Thyroid gland (tissue), 4 donors: ENCODE measurements at regions of chr9 and their contacts with region 1.

Region 1: DNA sequence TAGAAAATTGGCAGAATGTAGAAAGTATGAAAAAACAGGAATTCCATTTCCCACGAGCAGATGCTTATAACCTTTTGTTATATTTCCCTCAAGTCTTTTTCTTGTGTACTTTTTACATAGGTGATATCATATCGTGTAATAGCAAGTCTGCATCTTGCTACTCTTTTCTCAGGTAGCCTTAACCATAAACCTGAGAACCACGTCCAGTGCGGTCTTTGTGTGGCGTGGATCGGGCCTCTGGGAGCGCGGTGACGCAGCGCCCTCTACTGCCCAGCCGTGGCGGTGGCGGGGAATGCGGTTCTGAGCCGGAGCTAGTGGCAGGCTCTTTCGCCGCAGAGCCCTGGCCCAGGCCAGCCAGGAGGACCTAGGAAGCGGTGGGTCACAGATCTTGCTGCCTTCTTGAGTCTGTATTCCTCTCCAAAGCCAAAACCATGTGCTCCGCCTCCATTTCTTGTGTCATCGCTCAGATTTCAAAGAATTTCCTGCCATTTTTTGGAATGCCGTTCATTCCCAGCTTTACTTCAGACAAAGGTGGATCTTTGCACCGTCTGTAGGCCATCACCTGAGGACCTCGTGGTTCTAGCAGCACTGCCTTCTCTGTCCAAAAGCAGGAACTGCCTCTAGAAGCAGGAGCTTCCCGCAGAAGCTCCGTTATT is 71.9 kb downstream of the MVB12B start:
- DNase-seq: peak; percentile 75 to 76
- H3K4me3 ChIP-seq: no peak overlapping the region
- H3K27ac ChIP-seq: no peak overlapping the region
- H3K4me1 ChIP-seq: no peaks in the 10 kb centered on the region
- H3K27me3 ChIP-seq: no peaks in the 10 kb centered on the region
- CTCF ChIP-seq: peak; percentile 91 to 98 (median 94)
- POLR2A ChIP-seq: no peak

Region 2: DNA sequence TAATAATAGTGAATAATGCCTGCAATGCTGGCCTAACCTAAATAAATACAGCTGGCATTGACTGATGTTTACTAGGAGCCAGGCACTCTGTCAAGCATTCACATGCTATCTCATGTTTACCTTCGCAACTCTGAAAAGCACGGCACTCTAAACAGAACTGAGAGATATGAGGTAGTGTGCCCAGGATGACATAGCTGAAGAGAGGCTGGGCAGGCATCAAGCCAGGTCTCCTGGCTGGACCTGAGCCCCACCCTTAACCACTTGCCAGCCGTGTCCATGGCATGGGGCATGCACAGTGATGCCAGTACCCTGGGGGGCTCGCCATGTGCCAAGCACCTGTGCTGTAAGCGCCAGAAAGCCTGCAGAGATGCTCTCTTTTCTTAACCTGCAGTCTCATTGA is 191.3 kb before region 1 on chr9:
- intact Hi-C with region 1: no loop called
- DNase-seq: no peak
- H3K4me3 ChIP-seq: no peak overlapping the region
- H3K27ac ChIP-seq: no peak overlapping the region
- H3K4me1 ChIP-seq: no peaks in the 10 kb centered on the region
- H3K27me3 ChIP-seq: no peaks in the 10 kb centered on the region
- CTCF ChIP-seq: no peak
- POLR2A ChIP-seq: no peak

Region 3: DNA sequence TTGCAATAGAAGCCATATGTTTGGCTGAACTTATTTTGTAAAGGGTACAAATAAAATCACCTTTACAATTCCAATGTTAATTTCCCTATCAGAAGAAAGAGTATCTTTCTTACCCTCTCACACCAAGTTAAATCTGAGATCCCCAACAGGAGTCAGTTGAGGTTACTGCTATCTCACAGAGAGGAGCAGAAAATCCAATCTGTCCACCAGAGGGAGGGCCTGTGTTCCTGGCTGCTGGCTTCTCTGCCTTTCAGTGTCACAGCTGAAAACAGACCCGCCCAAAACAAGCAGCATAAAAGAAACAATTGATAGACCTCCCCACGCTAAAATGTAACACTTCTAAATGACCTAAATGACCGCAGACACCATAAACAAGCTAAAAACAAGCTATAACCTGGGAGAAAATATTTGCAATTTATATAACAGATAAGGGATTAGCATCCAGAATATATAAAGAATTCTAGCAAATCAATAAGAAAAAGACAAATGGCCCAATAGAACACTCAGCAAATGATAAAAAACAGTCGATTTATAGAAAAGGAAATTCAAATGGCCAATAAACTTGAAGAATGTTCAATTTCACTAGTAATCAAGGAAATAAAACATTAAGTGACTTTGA is 96.4 kb before region 1 on chr9:
- intact Hi-C with region 1: loop called (anchors 5 kb)
- DNase-seq: peak; percentile 54 to 61
- H3K4me3 ChIP-seq: no peak overlapping the region
- H3K27ac ChIP-seq: no peak overlapping the region
- H3K4me1 ChIP-seq: peaks cover 0 to 6% of the 10 kb centered on the region in 2 donors
- H3K27me3 ChIP-seq: no peaks in the 10 kb centered on the region
- CTCF ChIP-seq: peak; percentile 24 to 74 (median 52)
- POLR2A ChIP-seq: no peak

Region 4: DNA sequence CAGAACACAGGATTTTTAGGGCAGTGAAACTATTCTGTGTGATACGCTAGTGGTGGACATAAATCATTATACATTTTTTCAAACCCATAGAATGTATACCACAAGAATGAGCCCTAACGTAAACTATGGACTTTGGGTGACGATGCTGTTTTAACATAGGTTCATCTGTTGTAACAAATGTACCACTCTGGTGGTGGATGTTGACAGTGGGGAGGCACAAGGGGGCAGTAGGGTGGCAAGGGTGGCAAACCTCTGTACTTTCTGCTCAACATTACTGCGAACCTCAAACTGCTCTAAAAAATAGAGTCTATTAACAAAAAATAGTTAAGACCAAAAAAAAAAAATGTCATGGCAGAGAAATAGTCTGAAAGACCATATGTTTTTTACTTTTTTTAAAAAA is 81.0 kb before region 1 on chr9:
- intact Hi-C with region 1: loop called (anchors 5 kb)
- DNase-seq: peak in 1 of 2 donors; percentile 8
- H3K4me3 ChIP-seq: no peak overlapping the region
- H3K27ac ChIP-seq: no peak overlapping the region
- H3K4me1 ChIP-seq: no peaks in the 10 kb centered on the region
- H3K27me3 ChIP-seq: no peaks in the 10 kb centered on the region
- CTCF ChIP-seq: peak in 4 of 6 experiments; percentile 8 to 32 (median 24)
- POLR2A ChIP-seq: no peak

Region 5: GRCh38 chr9:126490871-126491567 is 92.5 kb after region 1 on chr9:
- intact Hi-C with region 1: loop called (anchors 5 kb)
- DNase-seq: peak; percentile 39 to 53
- H3K4me3 ChIP-seq: no peak overlapping the region
- H3K27ac ChIP-seq: no peak overlapping the region
- H3K4me1 ChIP-seq: no peaks in the 10 kb centered on the region
- H3K27me3 ChIP-seq: no peaks in the 10 kb centered on the region
- CTCF ChIP-seq: peak; percentile 72 to 97 (median 90)
- POLR2A ChIP-seq: no peak